SK-N-SH (cell line): ENCODE measurements at regions of chr16 and their contacts with region 1.

Region 1: DNA sequence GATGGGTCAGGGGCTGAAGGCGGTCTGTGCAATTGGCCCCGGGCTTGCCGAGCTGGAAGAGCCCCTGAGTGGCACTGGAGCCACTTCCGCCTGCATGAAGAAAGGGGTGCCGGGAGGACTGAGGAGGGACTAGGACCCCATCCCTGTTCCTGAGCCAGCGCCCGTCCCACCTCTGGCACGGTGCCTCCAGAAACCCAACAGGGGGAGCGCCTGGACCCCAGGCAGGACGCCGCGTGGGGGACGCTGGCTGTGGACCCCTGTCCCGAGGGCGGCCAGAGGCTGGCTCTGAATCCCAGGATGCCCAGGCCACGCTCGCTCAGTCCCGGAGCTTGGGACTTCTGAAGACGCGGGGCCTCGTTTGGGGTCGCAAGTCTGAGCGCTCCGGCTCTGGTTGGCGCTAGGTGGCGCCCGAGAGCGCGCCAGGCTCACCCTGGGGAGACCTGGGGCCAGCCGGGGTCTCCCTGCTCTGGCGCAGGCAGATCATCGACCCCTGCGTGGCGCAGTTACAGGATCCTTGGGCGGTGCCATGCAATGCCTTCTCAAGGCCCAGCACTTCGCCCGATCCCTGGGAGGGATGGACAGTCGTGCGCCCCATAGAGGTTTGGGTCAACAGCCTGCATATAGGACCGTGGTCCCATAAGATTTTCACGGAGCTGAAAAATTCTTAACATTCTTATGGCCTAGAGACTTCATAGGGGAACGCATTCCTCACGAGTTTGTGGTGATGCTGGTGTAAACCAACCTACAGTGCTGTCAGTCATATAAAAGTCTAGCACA is 58.5 kb upstream of the CREBBP start:
- DNase-seq: peak; percentile 95
- H3K4me3 ChIP-seq: peak overlapping the region; percentile 45 to 64
- H3K27ac ChIP-seq: no peak overlapping the region
- H3K4me1 ChIP-seq: peaks cover 0 to 2% of the 10 kb centered on the region in 2 experiments; a peak in 1 of 4 replicates
- H3K27me3 ChIP-seq: no peaks in the 10 kb centered on the region
- CTCF ChIP-seq: peak; percentile 91
- EP300 ChIP-seq: no peak
- RAD21 ChIP-seq: peak; percentile 59

Region 2: DNA sequence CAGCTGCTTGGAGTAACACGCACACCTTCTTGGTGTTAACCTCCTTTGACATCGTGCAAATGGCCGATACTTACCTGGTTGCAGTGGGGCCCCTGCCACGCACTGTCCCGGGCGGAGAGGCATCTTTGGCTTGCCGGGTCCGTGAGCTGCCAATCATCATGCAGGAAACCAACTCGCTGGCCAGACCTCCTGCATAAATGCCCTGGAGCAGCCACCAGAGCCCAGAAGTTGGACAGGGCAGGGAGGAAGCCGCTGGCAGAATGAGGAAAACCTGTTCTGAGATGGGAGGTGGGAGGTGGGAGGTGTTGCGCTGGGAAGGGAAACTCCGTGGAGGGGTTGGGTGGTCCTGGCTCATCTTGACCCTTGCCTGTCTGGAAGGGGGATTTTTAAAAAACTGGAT is 16.8 kb before region 1 on chr16:
- CTCF ChIA-PET with region 1: interaction called, 34 read pairs
- POLR2A ChIA-PET with region 1: no interaction called
- DNase-seq: no peak
- H3K4me3 ChIP-seq: no peak overlapping the region
- H3K27ac ChIP-seq: no peak overlapping the region
- H3K4me1 ChIP-seq: no peaks in the 10 kb centered on the region
- H3K27me3 ChIP-seq: peaks cover 8% of the 10 kb centered on the region; the same call in 1 of the 2 replicates
- CTCF ChIP-seq: no peak
- EP300 ChIP-seq: no peak
- RAD21 ChIP-seq: no peak

Region 3: GRCh38 chr16:3950343-3951193 is 11.5 kb after region 1 on chr16:
- CTCF ChIA-PET with region 1: interaction called, 32 read pairs
- POLR2A ChIA-PET with region 1: no interaction called
- DNase-seq: no peak
- H3K4me3 ChIP-seq: no peak overlapping the region
- H3K27ac ChIP-seq: no peak overlapping the region
- H3K4me1 ChIP-seq: peaks cover 0 to 14% of the 10 kb centered on the region in 2 experiments; a peak in 2 of 4 replicates
- H3K27me3 ChIP-seq: no peaks in the 10 kb centered on the region; the same call in 1 of the 2 replicates
- CTCF ChIP-seq: no peak
- EP300 ChIP-seq: no peak
- RAD21 ChIP-seq: no peak

Region 4: DNA sequence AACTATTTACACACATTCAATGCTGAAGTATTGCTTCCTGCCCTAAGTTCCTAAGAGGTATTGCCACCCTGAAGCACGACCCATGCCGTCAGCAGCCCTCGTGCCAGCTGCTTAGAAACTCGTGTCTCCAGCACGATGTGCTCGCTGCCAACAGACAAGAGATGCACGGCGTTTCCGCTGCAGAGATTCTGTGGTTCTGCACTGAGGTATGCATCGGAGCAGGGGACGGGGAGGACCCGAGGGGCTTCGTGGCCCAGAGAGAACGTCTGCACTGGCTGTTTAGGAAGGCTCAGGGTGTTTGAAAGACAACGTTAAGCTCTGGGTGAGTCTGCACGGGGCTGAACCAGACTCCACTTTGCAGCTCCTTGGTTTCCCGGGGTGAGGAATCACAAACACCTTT is 24.2 kb after region 1 on chr16:
- CTCF ChIA-PET with region 1: interaction called, 32 read pairs
- POLR2A ChIA-PET with region 1: no interaction called
- DNase-seq: no peak
- H3K4me3 ChIP-seq: no peak overlapping the region
- H3K27ac ChIP-seq: no peak overlapping the region
- H3K4me1 ChIP-seq: no peaks in the 10 kb centered on the region
- H3K27me3 ChIP-seq: 0 out of 2 replicates have a peak, but pooled peaks cover under 1% of the 10 kb centered on the region
- CTCF ChIP-seq: no peak
- EP300 ChIP-seq: no peak
- RAD21 ChIP-seq: no peak